IMR-90 (cell line): ENCODE measurements at regions of chr9 and their contacts with region 1.

Region 1: DNA sequence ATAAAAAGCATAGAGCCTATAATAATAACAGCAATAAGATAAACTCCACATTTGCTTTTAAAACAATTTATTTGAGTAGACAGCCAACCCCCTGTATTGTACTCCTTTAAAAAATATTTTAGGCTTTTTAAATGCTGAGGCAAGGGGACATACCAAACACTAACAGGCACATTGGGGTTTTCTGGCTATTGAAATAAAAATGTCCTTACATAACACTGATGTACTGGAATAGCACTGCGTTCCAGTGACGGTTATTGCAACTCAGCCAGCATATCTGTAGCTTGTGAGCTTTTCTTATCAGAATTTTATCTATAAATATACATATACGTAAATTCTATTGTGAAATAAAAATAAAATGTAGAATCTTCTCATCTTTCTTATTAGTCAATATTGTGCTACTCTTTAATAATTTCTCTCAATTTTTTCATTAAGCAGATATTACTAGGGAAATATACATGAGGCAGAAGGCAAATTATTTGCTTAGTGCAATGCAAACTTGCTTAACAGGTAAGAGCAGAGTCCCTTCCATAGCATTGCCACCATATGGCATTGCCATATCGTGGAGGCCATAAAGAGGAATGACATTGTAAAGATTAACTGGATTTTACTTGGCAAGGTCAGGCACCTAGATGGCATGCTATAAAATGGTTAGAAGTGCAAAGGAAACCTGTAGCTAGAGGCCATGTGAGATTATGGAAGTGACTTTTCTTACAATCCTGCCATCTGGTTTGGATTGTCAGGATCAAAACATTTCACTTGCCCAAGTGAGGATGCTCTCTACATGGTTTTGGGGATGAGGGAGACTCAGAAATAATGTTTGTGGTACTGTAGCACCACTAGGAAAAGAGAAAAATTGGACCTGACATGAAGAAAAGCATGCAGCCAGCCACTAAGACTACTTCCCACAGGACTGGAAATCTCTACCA is 94.8 kb upstream of the CDKN2B start:
- DNase-seq: peak; percentile 75
- ATAC-seq: peak; percentile 45
- H3K4me3 ChIP-seq: no peak overlapping the region
- H3K27ac ChIP-seq: peak overlapping the region; percentile 72; the same call in 1 of the 2 replicates
- H3K4me1 ChIP-seq: peaks cover 21% of the 10 kb centered on the region
- H3K27me3 ChIP-seq: no peaks in the 10 kb centered on the region
- CTCF ChIP-seq: no peak
- POLR2A ChIP-seq: no peak
- RAD21 ChIP-seq: no peak

Region 2: DNA sequence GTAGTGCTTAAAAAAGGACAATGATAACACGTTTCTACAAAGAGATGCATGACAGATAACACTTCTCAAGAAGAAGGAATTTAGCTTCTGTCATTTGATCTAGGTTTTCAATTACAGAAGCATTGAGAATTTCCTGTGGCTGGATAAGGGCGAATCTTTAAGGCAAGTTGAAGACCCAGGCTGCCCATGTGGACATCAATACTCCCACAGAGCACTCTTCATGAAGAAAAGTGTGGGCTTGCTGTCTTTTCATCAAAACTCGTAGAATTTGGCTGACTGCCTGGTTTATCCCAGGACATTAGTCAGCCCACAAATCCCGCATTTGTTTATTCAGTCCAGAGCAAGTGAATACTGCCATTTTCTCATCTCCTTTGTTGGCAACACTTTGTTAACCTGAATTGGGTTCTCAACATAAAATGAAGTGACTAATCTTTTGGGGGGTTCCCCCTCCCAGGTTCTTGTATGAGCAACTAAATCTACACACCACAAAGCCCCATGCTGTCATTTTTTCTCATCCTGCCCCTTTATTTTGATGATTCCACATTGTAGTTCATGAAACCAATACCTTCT is 51.5 kb before region 1 on chr9:
- CTCF ChIA-PET with region 1: interaction called, 3 read pairs
- POLR2A ChIA-PET with region 1: interaction called, 3 read pairs
- dilution Hi-C with region 1: no loop called
- in situ Hi-C with region 1: no loop called
- intact Hi-C with region 1: loop called (anchors 2 kb)
- DNase-seq: peak; percentile 99
- ATAC-seq: peak; percentile 76
- H3K4me3 ChIP-seq: no peak overlapping the region
- H3K27ac ChIP-seq: no peak overlapping the region
- H3K4me1 ChIP-seq: peaks cover 2% of the 10 kb centered on the region
- H3K27me3 ChIP-seq: no peaks in the 10 kb centered on the region
- CTCF ChIP-seq: no peak
- POLR2A ChIP-seq: no peak
- RAD21 ChIP-seq: no peak

Region 3: GRCh38 chr9:22084336-22085035 is 19.4 kb before region 1 on chr9:
- CTCF ChIA-PET with region 1: no interaction called
- POLR2A ChIA-PET with region 1: no interaction called
- dilution Hi-C with region 1: no loop called
- in situ Hi-C with region 1: no loop called
- intact Hi-C with region 1: loop called (anchors 2 kb)
- DNase-seq: peak; percentile 97
- ATAC-seq: peak; percentile 94
- H3K4me3 ChIP-seq: no peak overlapping the region
- H3K27ac ChIP-seq: peak overlapping the region; percentile 65; the same call in 1 of the 2 replicates
- H3K4me1 ChIP-seq: peaks cover 8% of the 10 kb centered on the region
- H3K27me3 ChIP-seq: no peaks in the 10 kb centered on the region
- CTCF ChIP-seq: no peak
- POLR2A ChIP-seq: no peak
- RAD21 ChIP-seq: peak; percentile 26; the same call in 1 of the 2 replicates

Region 4: DNA sequence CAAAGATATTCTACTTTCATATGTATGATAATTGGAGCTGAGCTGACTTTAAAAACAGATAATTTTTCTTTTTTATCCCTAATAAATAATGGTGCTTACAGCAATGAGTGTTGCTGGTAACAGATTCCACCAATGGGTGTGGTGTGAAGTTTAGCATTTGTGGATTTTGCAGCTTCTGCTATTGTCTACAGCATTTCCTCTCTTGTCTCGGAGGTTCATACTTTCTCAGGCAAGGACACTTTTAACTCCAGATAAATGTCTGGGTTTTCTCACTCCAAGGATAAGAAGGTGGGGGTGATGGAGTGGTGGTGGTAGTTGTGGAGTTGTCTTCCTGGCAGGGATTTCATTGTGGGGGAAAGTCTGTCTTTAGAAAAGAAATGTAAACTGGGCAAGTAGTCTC is 25.2 kb after region 1 on chr9:
- CTCF ChIA-PET with region 1: no interaction called
- POLR2A ChIA-PET with region 1: no interaction called
- dilution Hi-C with region 1: no loop called
- in situ Hi-C with region 1: no loop called
- intact Hi-C with region 1: no loop called
- DNase-seq: no peak
- ATAC-seq: no peak
- H3K4me3 ChIP-seq: no peak overlapping the region
- H3K27ac ChIP-seq: no peak overlapping the region
- H3K4me1 ChIP-seq: peaks cover 2% of the 10 kb centered on the region; the same call in 1 of the 2 replicates
- H3K27me3 ChIP-seq: no peaks in the 10 kb centered on the region
- CTCF ChIP-seq: no peak
- POLR2A ChIP-seq: no peak
- RAD21 ChIP-seq: no peak